Endothelial cell of umbilical vein (primary cell): ENCODE measurements at regions of chr18 and their contacts with region 1.

Region 1: GRCh38 chr18:77940566-77940965 is 690.9 kb downstream of the GALR1 start:
- DNase-seq: no peak
- H3K4me3 ChIP-seq: no peak overlapping the region
- H3K27ac ChIP-seq: no peak overlapping the region
- H3K4me1 ChIP-seq: no peaks in the 10 kb centered on the region
- H3K27me3 ChIP-seq: no peaks in the 10 kb centered on the region
- CTCF ChIP-seq: no peak
- POLR2A ChIP-seq: no peak

Region 2: GRCh38 chr18:77635451-77635850 is 305.1 kb before region 1 on chr18:
- CTCF ChIA-PET with region 1: no interaction called
- POLR2A ChIA-PET with region 1: no interaction called
- dilution Hi-C with region 1: no loop called
- intact Hi-C with region 1: no loop called
- DNase-seq: no peak
- H3K4me3 ChIP-seq: no peak overlapping the region
- H3K27ac ChIP-seq: no peak overlapping the region
- H3K4me1 ChIP-seq: no peaks in the 10 kb centered on the region
- H3K27me3 ChIP-seq: no peaks in the 10 kb centered on the region
- CTCF ChIP-seq: no peak
- POLR2A ChIP-seq: no peak

Region 3: DNA sequence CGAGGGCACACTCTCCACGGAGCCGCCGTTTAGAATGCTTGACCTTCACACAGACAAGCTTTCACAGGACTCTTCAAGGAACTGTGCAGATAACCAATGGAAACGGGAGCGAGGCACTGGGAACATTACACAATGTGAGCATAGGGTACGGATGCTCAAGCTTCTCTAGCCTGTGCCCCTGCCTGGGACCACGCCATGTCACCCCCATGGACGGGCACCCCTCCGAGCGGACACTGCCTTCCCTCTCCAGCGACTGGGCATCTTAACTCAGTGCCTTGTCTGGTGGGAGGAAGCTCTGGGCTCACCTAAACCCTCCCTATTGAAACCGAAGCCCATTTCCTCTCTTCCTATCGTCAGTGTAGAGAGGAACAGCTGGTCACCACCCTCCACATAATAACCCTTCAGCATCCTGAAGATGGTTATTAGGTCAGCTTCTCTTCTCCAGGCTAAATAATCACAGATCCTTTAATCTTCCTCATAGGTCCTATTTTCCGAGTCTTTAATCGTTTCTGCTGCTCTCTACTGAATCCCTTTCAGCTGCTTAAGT is 64.2 kb before region 1 on chr18:
- CTCF ChIA-PET with region 1: no interaction called
- POLR2A ChIA-PET with region 1: no interaction called
- dilution Hi-C with region 1: no loop called
- intact Hi-C with region 1: no loop called
- DNase-seq: no peak
- H3K4me3 ChIP-seq: no peak overlapping the region
- H3K27ac ChIP-seq: no peak overlapping the region
- H3K4me1 ChIP-seq: no peaks in the 10 kb centered on the region
- H3K27me3 ChIP-seq: no peaks in the 10 kb centered on the region
- CTCF ChIP-seq: no peak
- POLR2A ChIP-seq: no peak

Region 4: DNA sequence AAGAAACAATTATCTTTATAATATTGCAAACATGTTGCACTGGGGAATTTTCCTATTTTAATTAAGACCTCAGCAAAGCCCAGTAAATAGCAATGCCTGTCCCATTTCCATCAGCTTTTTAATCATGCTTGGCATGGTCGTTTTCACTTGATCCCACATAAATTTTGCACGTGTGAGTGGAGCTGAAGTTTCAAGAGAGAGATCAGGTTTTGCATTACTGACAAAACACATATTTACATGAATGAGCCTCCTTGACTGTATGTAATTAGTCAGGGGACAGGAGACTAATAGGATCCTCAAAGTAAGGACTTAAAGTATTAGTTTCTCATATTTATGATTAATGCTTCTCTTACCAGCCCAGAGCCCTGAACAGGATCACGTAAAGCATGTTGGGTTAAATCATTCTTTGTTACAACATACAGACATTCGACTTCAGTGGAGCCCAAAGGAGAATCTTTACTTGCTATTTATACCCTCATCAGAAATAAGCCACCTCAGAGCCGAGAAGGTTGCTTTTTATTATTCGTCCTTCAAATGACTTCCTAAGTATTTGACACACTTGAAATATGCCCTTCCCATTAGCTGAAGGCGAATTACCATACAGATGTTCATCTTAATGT is 20.3 kb after region 1 on chr18:
- CTCF ChIA-PET with region 1: no interaction called
- POLR2A ChIA-PET with region 1: no interaction called
- dilution Hi-C with region 1: no loop called
- intact Hi-C with region 1: loop called (anchors 1 kb)
- DNase-seq: no peak
- H3K4me3 ChIP-seq: no peak overlapping the region
- H3K27ac ChIP-seq: no peak overlapping the region
- H3K4me1 ChIP-seq: no peaks in the 10 kb centered on the region
- H3K27me3 ChIP-seq: no peaks in the 10 kb centered on the region
- CTCF ChIP-seq: no peak
- POLR2A ChIP-seq: no peak